K562 (cell line): ENCODE measurements at regions of chr9 and their contacts with region 1.

Region 1: DNA sequence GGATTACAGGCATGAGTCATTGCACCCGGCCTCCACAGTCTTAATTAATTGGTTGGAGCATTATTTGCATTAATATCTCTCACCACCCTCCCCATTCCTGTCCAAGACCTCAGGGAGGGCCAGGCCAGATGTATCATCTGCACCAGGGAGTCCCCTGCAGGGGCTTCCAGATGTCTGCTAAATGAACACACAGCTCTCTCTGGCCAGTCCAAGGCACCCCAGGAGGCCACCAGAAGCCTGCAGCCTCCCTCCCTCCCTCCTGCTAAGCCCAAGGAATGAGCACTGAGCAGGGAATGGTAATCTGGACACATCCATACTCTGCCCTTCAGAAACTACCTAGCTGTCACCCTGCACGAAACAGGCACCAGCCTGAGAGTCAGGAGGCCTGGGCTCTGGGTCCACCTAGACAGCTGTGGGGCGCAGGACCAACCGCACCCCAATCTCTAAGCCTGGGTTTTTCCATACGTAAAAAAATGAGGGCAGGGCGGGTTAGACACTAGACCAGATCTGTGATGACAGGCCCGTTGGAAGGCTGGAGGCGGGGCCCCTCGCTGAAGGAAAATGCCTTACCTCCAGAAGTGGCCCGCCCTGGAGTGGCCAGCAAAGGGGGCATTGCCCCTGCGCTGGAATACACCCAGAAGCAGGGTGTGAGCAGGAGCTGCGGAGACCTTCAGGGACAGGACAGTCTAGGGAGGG is 8.3 kb downstream of the CIZ1 start:
- DNase-seq: no peak
- ATAC-seq: peak; percentile 9
- H3K4me3 ChIP-seq: no peak overlapping the region
- H3K27ac ChIP-seq: no peak overlapping the region
- H3K4me1 ChIP-seq: peaks cover 10 to 22% of the 10 kb centered on the region in 2 experiments; a peak in 4 of 5 replicates
- H3K27me3 ChIP-seq: no peaks in the 10 kb centered on the region
- CTCF ChIP-seq: no peak
- EP300 ChIP-seq: no peak
- POLR2A ChIP-seq: no peak
- RAD21 ChIP-seq: no peak

Region 2: DNA sequence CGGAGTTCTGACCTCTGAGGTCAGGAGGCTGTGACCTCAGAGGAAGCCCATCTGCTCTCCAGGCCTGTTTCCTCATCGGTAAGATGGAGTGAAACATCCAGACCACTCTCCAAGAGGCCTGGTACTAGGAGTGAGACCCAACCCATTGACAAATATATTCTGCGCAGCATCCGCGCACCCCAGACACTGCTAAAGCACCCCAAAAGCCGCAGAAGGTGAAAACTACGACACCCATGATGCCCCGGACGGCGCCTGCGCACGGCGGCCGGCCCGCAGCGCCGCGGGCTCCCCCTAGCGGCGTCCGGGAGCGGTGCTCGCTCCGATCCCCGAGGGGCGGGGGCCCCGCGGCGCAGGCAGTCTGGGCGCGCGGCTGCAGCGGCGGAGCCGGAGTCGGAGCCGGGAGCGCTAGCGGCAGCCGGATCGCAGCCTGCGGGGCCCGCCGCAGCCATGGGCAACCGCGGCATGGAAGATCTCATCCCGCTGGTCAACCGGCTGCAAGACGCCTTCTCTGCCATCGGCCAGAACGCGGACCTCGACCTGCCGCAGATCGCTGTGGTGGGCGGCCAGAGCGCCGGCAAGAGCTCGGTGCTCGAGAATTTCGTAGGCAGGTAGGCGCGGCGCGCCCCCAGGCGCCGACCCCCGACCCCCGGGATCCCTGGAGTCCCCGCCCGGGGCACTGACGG is 20.1 kb after region 1 on chr9 and contains the start of gene DNM1:
- CTCF ChIA-PET with region 1: no interaction called
- POLR2A ChIA-PET with region 1: interaction called, 10 read pairs
- in situ Hi-C with region 1: no loop called
- intact Hi-C with region 1: no loop called
- DNase-seq: peak; percentile 91 to 100 (median 100)
- ATAC-seq: peak; percentile 92
- H3K4me3 ChIP-seq: peak within 1 kb of the TSS; percentile 55
- H3K27ac ChIP-seq: peak within 1 kb of the TSS; percentile 20; the same call in 2 of the 3 replicates
- H3K4me1 ChIP-seq: peaks cover 19 to 36% of the 10 kb centered on the region in 2 experiments
- H3K27me3 ChIP-seq: no peaks in the 10 kb centered on the region
- CTCF ChIP-seq: peak; percentile 96 to 99 (median 97)
- EP300 ChIP-seq: peak; percentile 45
- POLR2A ChIP-seq: no peak
- RAD21 ChIP-seq: peak; percentile 46 to 67
- polyA plus RNA-seq, gene DNM1: 0.39 to 0.58 TPM

Region 3: GRCh38 chr9:128231638-128232527 is 48.8 kb after region 1 on chr9:
- CTCF ChIA-PET with region 1: no interaction called
- POLR2A ChIA-PET with region 1: no interaction called
- in situ Hi-C with region 1: no loop called
- intact Hi-C with region 1: no loop called
- DNase-seq: peak in 1 of 4 experiments; percentile 58
- ATAC-seq: peak; percentile 27
- H3K4me3 ChIP-seq: no peak overlapping the region
- H3K27ac ChIP-seq: no peak overlapping the region
- H3K4me1 ChIP-seq: peaks cover 0 to 18% of the 10 kb centered on the region in 2 experiments; a peak in 2 of 5 replicates
- H3K27me3 ChIP-seq: peaks cover 33 to 49% of the 10 kb centered on the region in 2 experiments
- CTCF ChIP-seq: no peak
- EP300 ChIP-seq: no peak
- POLR2A ChIP-seq: no peak
- RAD21 ChIP-seq: no peak